ENCODE measurements at regions of chrX and their contacts with region 1.

Region 1: DNA sequence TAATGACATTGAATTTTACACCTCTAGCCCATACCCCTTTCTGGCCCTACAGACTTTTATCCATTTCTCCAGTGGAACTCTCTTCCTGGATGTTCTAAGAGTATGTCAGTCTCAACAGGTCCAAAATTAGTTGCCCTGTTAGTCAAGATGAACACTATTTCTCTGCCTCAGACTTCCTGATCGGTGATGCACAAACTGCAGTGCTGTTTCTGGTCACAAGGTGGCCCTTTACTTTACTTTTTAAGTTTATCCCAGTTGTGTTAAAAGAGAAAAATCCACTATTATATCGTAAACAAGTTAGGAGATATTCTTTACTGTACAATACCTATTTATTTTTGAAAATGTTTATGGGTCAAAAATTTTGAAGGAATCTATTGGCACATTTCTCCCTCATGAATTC is 13.1 kb downstream of the TCEAL7 start:
- DNase-seq: no peak
- H3K4me3 ChIP-seq: no peak overlapping the region
- H3K27ac ChIP-seq: no peak overlapping the region
- H3K4me1 ChIP-seq: no peaks in the 10 kb centered on the region
- H3K27me3 ChIP-seq: no peaks in the 10 kb centered on the region
- CTCF ChIP-seq: peak; percentile 45 to 55 (median 50)
- EP300 ChIP-seq: no peak
- POLR2A ChIP-seq: no peak

Region 2: DNA sequence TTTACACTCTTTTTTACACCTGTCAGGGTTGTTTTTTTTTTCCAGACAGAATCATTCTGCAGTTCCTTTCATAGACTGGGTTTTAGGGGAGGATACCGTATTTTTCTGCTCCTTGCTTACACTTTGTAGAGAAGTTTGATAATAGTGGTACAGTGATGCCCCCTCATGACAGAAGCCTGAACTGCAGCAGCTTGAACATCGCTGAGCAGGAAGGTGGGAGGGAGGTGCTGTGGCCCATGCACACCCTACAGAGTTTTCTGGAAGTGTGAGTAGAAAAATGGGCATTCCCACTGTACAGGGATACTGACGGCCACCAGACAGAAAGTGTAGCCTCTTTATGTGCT is 121.6 kb after region 1 on chrX:
- intact Hi-C with region 1: loop called (anchors 1 kb)
- DNase-seq: peak; percentile 76
- H3K4me3 ChIP-seq: peak overlapping the region in 3 of 4 donors; percentile 27 to 38 (median 31)
- H3K27ac ChIP-seq: no peak overlapping the region
- H3K4me1 ChIP-seq: no peaks in the 10 kb centered on the region
- H3K27me3 ChIP-seq: no peaks in the 10 kb centered on the region
- CTCF ChIP-seq: peak; percentile 45 to 68 (median 54)
- EP300 ChIP-seq: no peak
- POLR2A ChIP-seq: no peak